ENCODE measurements at regions of chr17 and their contacts with region 1.

Region 1: DNA sequence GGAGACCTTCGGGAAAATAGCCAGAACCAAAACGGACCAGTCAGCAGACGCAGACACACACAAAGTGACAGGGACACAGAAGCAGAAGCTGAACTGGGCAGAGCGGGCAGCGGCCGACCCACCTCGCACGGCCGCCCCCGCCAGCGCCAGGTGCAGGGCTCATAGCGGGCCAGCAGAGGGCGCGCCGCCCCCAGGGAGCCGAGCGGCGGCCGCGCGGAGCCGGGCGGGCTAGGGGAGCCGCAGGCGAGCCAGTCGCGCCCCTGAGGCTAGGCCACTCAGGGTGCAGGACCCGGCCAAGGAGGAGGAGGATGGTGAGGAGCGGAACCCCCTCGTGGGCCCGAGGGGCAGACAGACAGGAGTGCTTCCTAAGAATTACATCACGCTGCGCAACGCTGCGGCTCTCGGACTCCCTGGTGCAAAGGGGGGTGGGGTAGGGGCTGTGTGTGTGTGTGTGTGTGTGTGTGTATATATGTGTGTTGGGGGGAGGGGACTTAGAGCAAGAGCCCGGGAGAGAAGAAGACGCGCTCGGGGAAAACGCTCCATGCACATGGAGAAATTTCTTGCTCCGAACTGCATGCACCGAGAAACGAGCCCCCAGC is 913 bp upstream of the NOG start:
- DNase-seq: peak in 1 of 2 donors; percentile 53
- ATAC-seq: peak; percentile 76

Region 2: DNA sequence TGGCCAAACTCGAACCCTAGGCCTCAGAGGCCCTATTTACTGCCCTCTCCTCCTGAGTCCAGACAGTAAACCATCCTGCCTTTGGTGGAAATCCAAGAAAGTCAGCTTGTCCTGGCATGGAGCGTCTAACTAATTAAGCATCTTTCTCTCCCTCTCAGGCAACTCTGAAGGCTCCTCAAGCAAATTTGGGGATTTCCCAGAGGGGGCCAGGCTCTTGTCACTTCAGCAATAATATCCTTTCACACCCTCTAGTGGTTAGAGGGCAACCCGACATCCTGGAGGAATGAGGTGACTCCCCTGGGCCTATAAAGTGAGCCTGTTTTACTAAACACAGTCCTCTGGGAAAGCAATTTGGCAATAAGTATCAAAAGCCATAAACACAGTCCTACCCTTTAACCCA is 61.3 kb after region 1 on chr17:
- intact Hi-C with region 1: no loop called
- DNase-seq: peak in 1 of 2 donors; percentile 5
- ATAC-seq: no peak

Region 3: GRCh38 chr17:56715613-56716357 is 123.2 kb after region 1 on chr17:
- intact Hi-C with region 1: loop called (anchors 5 kb)
- DNase-seq: peak; percentile 64 to 80
- ATAC-seq: peak; percentile 81

Region 4: DNA sequence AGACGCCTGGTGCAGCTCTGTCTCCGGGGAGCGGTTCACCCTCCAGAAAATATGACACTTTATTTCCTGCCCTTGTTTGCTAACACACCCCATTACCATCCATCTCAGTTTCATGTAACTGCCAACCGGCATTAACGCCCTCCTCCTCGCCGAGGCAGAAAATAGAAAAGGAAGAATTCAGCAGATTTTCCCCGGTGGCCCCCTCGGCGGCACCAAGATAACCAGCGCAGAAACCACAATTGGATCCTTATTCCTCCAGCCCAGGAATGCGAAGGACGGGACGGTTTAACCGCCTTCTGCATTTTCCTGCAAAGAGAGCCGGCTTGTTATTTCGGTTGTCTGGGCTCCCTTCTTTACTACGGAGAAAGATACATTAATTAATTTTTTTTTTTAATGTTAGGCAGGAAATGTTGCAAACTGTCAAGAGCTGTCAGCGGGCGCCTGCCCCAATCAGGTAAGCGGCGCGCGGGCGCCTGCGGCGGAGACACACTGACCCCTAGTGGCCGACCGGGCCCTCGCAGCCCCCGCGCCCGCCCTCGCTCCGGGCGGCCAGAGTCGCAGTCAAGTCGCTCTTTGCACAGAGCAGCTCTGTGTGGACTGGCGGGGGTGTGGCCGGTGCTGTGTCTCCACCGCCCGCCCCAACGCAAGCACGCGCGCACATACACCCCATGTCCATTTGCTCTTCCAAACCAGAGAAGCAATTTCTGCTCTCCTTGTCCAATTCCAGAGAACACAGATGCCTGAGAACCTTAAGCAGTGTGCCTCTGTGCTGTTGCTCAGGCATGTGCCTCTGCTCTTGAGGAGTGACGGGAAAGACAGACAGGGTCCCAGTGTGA is 187.5 kb after region 1 on chr17:
- intact Hi-C with region 1: loop called in 1 of 2 experiments (anchors 5 kb)
- DNase-seq: peak; percentile 67 to 83
- ATAC-seq: peak; percentile 99

Region 5: DNA sequence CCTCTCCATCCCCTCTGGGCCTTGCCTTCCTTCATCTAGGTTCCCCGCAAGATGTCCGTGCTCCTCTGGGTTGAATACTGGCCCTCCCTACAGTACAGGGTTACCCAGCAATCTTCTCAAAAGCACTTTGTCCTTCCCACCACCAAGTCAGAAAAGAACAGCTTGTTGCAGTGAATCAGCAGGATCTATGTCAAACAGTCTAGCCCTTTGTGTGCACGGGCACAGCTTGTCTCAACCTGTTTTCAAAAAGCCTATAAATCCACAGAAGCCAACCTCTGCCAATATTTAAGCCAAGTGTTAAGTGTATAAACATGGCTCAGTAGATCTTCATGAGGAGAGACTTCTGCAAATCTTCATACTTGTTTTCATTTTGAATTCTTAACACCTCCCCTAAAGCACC is 215.9 kb after region 1 on chr17:
- intact Hi-C with region 1: no loop called
- DNase-seq: no peak
- ATAC-seq: peak; percentile 27

Measured in left colon (tissue), 2 donors.